ENCODE measurements at regions of chr4 and their contacts with region 1.

Region 1: DNA sequence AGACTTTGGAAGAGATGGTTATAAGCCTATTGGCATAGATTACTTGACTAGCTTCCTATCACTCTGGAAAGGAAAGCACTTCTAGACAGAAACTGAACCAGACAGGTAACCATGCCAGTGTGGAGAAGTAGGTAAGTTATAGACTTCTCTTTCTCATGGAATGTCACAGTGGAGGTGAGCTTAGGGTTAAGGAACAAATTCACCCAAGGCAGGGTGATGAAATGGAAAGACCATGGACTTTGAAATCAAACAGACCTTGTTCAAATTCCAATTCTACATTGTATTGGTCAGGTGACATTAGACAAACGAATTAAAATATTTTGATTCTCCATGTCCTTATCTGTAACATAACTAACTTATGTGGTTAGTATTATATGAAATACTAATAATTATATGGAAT is 7.7 kb upstream of the RAP1GDS1 start:
- DNase-seq: no peak
- H3K4me3 Mint-ChIP-seq: no peak overlapping the region
- H3K27ac Mint-ChIP-seq: no peak overlapping the region
- H3K4me1 Mint-ChIP-seq: peaks cover 16% of the 10 kb centered on the region
- H3K27me3 Mint-ChIP-seq: no peaks in the 10 kb centered on the region

Region 2: DNA sequence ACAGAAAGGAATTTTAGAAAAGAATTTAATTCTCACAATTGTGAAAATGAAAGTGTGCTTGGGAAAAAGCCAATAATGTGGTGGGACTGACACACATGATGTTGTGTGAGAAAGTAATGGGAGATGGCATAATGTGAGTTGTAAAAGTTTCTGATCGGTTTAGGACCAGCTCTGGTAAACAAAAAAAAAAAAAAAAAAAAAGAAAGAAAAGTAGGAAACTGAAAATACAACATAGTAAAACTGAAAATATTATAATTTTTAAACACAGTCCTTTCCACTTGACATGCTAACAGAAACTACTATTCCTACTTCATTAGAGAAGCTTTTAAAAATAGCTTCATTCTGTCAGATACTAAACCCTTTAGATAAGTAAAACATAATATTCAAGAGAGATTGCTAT is 35.9 kb after region 1 on chr4:
- CTCF ChIA-PET with region 1: no interaction called
- POLR2A ChIA-PET with region 1: no interaction called
- intact Hi-C with region 1: loop called (anchors 5 kb)
- DNase-seq: no peak
- H3K4me3 Mint-ChIP-seq: peak overlapping the region; percentile 38
- H3K27ac Mint-ChIP-seq: peak overlapping the region; percentile 13
- H3K4me1 Mint-ChIP-seq: peaks cover 51% of the 10 kb centered on the region
- H3K27me3 Mint-ChIP-seq: no peaks in the 10 kb centered on the region

Measured in activated CD4-positive, alpha-beta memory T cell treated with anti-CD3 and anti-CD28 coated beads for 36 hours (primary cell).